WTC11 (cell line): ENCODE measurements at regions of chr20 and their contacts with region 1.

Region 1: DNA sequence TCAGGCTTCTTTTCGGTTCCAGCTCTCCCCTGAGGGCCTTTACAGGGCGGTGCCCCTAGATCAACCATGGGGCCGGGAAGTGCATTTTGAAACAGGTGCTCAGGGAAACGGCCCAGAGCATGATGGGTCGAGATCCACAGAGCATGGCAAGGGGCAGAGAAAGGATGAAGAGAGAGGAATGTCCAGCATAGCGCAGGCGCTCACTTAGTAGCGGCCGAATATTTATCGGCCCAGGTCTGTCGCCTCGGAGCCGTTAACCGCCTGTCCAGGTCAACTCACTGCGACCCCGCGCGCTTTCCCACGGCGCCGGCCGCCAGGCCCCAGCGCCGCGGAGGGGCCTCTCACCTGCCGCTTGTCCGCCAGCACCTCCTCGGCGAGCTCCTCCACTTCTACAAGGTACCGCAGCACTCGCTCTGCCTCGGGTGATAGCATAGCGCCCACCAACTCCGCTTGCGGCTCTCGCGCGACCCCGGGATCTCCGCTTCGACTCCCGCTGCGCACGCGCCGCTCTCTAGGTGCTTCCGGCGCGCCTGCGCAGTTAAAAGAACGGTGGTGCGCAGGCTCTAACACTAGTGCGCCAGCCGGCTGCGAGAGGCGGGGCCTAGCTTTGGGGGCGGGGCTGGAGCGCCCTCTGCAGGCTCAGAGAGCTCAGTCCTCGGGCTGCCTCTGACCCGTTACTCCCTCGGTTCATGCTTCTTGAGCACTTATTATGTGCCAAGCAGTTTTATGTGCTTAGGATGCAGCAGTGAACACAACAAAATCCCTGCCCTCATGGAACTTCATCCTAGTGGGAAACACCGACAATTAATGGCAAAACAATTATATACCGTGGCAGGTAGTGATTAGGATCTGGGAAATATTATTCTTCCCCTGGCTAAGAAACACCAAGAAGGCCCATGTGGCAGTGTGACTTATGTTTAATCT is at the start of gene PDRG1:
- DNase-seq: peak; percentile 98
- ATAC-seq: peak; percentile 98
- H3K4me3 Mint-ChIP-seq: peak within 1 kb of the TSS; percentile 98
- H3K27ac Mint-ChIP-seq: peak within 1 kb of the TSS; percentile 92
- H3K4me1 Mint-ChIP-seq: peaks cover 8% of the 10 kb centered on the region
- H3K27me3 Mint-ChIP-seq: peaks cover 15% of the 10 kb centered on the region
- CTCF ChIP-seq: peak; percentile 77
- total RNA-seq, gene PDRG1: 16.0 to 17.6 TPM (median 17.2 TPM) in 3 replicates

Region 2: GRCh38 chr20:31835977-31836852 is 115.6 kb before region 1 on chr20:
- CTCF ChIA-PET with region 1: interaction called, 12 read pairs
- POLR2A ChIA-PET with region 1: no interaction called
- DNase-seq: no peak
- ATAC-seq: no peak
- H3K4me3 Mint-ChIP-seq: no peak overlapping the region
- H3K27ac Mint-ChIP-seq: no peak overlapping the region
- H3K4me1 Mint-ChIP-seq: 0 out of 2 replicates have a peak, but pooled peaks cover 13% of the 10 kb centered on the region
- H3K27me3 Mint-ChIP-seq: no peaks in the 10 kb centered on the region
- CTCF ChIP-seq: no peak

Region 3: GRCh38 chr20:31869942-31870725 is 81.7 kb before region 1 on chr20 and contains the starts of genes DUSP15 and TTLL9:
- CTCF ChIA-PET with region 1: interaction called, 10 read pairs
- POLR2A ChIA-PET with region 1: no interaction called
- DNase-seq: peak; percentile 60
- ATAC-seq: peak; percentile 68
- H3K4me3 Mint-ChIP-seq: peak within 1 kb of the TSS; percentile 93
- H3K27ac Mint-ChIP-seq: peak within 1 kb of the TSS; percentile 45; the same call in 1 of the 2 replicates
- H3K4me1 Mint-ChIP-seq: peaks cover 14% of the 10 kb centered on the region
- H3K27me3 Mint-ChIP-seq: peaks cover 59% of the 10 kb centered on the region
- CTCF ChIP-seq: no peak
- total RNA-seq, gene DUSP15: 1.7 to 2.4 TPM (median 2.0 TPM) in 3 replicates
- total RNA-seq, gene TTLL9: 0.39 TPM in 1 of 3 replicates, not detected in the others

Region 4: DNA sequence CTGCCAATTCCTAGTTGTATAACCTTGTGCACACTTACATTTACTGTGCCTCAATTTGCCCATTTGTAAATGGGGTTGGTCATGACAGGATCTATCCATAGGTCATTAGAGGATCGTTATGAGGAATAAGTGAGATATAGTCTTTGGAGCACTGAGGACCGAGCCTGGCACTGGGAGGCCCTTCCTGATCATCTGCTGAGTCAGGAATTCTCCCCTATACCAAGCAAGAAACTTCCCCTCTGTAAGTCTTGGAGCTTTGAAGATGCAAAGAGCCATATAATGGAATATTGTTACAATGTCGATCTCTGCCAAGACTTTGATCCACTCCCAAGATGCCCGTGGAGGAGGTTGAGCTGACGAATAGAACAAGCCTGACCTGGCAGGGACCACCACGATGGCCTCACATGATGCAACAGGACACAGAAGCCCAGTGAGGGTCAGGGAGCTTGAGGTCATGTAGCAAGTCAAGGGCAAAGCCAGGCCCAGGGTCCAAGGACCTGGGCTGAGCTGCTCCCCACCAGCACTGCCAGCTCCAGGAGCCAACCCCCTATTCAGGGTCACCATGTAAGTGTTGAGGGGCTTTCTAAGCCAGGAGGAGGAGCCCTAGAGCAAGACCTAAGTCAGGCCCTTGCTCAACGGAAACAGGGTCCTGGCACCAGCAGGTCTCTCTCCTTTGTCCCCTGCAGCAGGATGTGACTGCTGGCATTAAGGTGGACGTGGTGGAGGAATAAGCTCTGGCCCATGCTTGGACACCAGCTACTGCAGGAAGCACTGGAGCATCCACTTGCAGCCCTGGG is 16.6 kb before region 1 on chr20:
- CTCF ChIA-PET with region 1: interaction called, 50 read pairs
- POLR2A ChIA-PET with region 1: no interaction called
- DNase-seq: peak; percentile 49
- ATAC-seq: peak; percentile 97
- H3K4me3 Mint-ChIP-seq: no peak overlapping the region
- H3K27ac Mint-ChIP-seq: no peak overlapping the region
- H3K4me1 Mint-ChIP-seq: peaks cover 8% of the 10 kb centered on the region
- H3K27me3 Mint-ChIP-seq: peaks cover 4% of the 10 kb centered on the region; the same call in 1 of the 2 replicates
- CTCF ChIP-seq: no peak; the same call in 1 of the 2 replicates

Region 5: DNA sequence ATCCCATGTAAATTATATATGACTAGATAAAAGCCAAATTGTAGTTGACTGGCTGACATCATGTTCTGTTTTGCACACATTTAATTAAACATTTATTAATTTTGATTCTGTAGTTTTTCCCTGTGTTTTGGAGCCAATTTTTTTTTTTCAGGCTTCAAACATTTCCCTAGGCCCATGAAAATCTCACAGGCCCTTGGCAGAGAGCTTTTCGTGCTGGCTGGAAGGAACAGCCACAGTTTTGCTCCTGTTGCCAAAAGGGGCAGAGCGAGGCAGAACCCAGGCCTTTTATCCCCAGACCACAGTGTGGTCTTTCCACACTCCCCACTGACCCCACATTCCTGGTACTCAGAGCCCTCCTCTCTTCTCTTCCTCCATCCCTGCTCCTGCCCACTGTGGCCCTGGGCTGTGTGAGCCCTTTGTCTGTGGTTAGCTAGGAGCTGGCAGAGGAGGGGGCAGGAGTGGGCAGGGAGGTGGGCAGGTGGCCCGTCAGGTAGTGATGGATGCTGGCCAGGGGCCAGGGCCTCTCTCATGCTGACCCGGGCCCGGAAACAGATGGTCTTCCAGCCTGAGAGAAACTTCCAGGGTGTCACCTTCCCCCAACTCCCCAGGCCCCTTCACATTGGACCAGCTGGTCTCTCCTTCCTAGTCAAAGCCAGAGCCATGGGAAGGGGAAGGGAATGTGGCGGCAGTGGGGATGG is 39.0 kb after region 1 on chr20:
- CTCF ChIA-PET with region 1: interaction called, 12 read pairs
- POLR2A ChIA-PET with region 1: no interaction called
- DNase-seq: no peak
- ATAC-seq: no peak
- H3K4me3 Mint-ChIP-seq: no peak overlapping the region
- H3K27ac Mint-ChIP-seq: no peak overlapping the region
- H3K4me1 Mint-ChIP-seq: peaks cover 9% of the 10 kb centered on the region
- H3K27me3 Mint-ChIP-seq: peaks cover 41% of the 10 kb centered on the region
- CTCF ChIP-seq: no peak

Region 6: GRCh38 chr20:32031007-32031958 is 79.5 kb after region 1 on chr20:
- CTCF ChIA-PET with region 1: interaction called, 11 read pairs
- POLR2A ChIA-PET with region 1: no interaction called
- DNase-seq: peak; percentile 95
- ATAC-seq: peak; percentile 99
- H3K4me3 Mint-ChIP-seq: peak overlapping the region; percentile 56
- H3K27ac Mint-ChIP-seq: no peak overlapping the region
- H3K4me1 Mint-ChIP-seq: peaks cover 13% of the 10 kb centered on the region
- H3K27me3 Mint-ChIP-seq: peaks cover 7% of the 10 kb centered on the region
- CTCF ChIP-seq: peak; percentile 100

Region 7: GRCh38 chr20:32168184-32168905 is 216.6 kb after region 1 on chr20:
- CTCF ChIA-PET with region 1: no interaction called
- POLR2A ChIA-PET with region 1: no interaction called
- DNase-seq: peak; percentile 31
- ATAC-seq: peak; percentile 96
- H3K4me3 Mint-ChIP-seq: no peak overlapping the region
- H3K27ac Mint-ChIP-seq: peak overlapping the region; percentile 58
- H3K4me1 Mint-ChIP-seq: peaks cover 11% of the 10 kb centered on the region
- H3K27me3 Mint-ChIP-seq: no peaks in the 10 kb centered on the region
- CTCF ChIP-seq: no peak